A549 (cell line): ENCODE measurements at regions of chr12 and their contacts with region 1.

Region 1: DNA sequence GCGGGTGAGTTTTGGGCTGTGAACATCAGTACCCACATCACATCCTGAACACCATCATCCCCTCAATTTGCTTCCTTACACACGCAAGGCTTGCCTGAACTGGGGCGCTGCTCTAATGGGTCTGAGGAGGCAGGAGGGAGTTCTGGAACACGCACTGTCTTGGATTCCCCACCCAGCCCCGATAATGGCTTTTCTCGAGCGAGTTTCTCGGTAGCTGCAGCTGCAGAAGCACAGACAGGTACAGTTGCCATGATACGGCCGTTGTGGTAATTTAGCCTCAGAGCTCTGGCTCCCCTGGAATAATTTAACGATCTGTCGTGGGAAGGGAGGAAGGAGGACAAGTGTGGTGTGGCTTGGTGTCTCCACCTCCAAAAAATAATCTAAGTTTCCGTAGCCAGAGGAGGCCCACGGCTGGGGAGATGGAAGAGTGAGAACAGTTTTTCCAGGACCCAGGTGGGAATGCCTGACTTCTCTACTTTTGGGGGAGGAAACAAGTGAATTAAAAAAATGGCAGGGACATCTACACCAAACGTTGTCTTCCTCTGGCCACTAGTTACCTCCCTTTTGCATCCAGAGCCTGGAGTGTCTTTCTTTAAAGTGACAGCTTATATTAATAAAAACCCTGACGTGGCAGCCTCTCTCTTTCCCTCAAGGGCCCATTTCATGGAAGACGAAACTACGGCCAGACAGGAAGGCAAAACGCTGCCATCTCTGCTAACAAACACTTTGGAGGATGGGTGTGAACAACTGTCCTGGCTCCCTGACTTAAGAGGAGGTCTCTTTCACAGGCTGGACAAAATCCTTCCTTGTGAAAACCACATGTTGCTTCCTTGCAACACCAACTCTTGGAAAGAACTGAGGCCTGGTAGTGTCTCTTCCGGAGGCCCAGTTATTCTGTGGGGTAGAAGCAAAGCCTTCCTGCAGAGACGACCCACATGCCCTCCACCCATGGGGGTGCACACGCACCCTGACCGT is 84.8 kb downstream of the RBM19 start:
- DNase-seq: no peak
- ATAC-seq: no peak
- H3K4me3 ChIP-seq: no peak overlapping the region
- H3K27ac ChIP-seq: no peak overlapping the region
- H3K4me1 ChIP-seq: no peaks in the 10 kb centered on the region
- CTCF ChIP-seq: no peak
- EP300 ChIP-seq: no peak
- POLR2A ChIP-seq: no peak
- RAD21 ChIP-seq: no peak

Region 2: DNA sequence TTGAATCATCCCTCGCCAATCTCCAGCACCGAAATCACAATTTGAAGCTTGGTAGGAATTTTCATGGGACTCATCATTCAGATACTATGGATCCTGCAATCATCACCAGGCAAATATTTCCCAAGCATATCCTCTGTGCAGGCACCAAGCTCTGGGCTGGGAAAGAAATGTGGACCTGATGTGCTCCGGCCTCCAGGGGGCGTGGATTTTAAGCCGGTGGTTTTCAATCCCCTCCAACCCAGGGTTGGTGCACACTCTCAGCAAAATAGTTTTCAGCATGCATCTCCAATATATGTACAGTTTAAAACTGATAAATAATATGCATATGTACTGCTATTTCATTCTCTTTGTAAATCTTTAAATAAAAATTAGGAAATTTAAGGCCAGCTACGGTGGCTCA is 14.0 kb before region 1 on chr12:
- CTCF ChIA-PET with region 1: interaction called, 21 read pairs
- POLR2A ChIA-PET with region 1: no interaction called
- DNase-seq: peak; percentile 27 to 54
- ATAC-seq: peak; percentile 63 to 84; a peak in 4 of 6 replicates
- H3K4me3 ChIP-seq: no peak overlapping the region
- H3K27ac ChIP-seq: no peak overlapping the region
- H3K4me1 ChIP-seq: peaks cover 14% of the 10 kb centered on the region
- CTCF ChIP-seq: peak; percentile 44; the same call in 2 of the 3 replicates
- EP300 ChIP-seq: no peak
- POLR2A ChIP-seq: no peak
- RAD21 ChIP-seq: no peak